Natural killer cell (primary cell): ENCODE measurements at regions of chr4 and their contacts with region 1.

Region 1: GRCh38 chr4:1693129-1693896 is 9.2 kb upstream of the FAM53A start:
- DNase-seq: peak; percentile 68 to 92
- ATAC-seq: peak; percentile 92 to 99 (median 95)
- H3K4me3 ChIP-seq: no peak overlapping the region
- H3K4me3 Mint-ChIP-seq: no peak overlapping the region
- H3K27ac ChIP-seq: no peak overlapping the region
- H3K27ac Mint-ChIP-seq: no peak overlapping the region
- H3K4me1 ChIP-seq: no peaks in the 10 kb centered on the region
- H3K4me1 Mint-ChIP-seq: no peaks in the 10 kb centered on the region
- H3K27me3 ChIP-seq: no peaks in the 10 kb centered on the region
- H3K27me3 Mint-ChIP-seq: no peaks in the 10 kb centered on the region
- CTCF ChIP-seq: peak; percentile 86

Region 2: GRCh38 chr4:1726146-1726934 is 33.0 kb after region 1 on chr4:
- intact Hi-C with region 1: loop called (anchors 1 kb)
- DNase-seq: peak; percentile 91 to 92
- ATAC-seq: peak; percentile 60 to 77 (median 63)
- H3K4me3 ChIP-seq: no peak overlapping the region
- H3K4me3 Mint-ChIP-seq: peak overlapping the region; percentile 13
- H3K27ac ChIP-seq: no peak overlapping the region
- H3K27ac Mint-ChIP-seq: peak overlapping the region; percentile 58 to 61
- H3K4me1 ChIP-seq: peaks cover 51% of the 10 kb centered on the region
- H3K4me1 Mint-ChIP-seq: peaks cover 30 to 37% of the 10 kb centered on the region in 2 donors
- H3K27me3 ChIP-seq: no peaks in the 10 kb centered on the region
- H3K27me3 Mint-ChIP-seq: no peaks in the 10 kb centered on the region
- CTCF ChIP-seq: peak; percentile 86